ENCODE measurements at regions of chr1 and their contacts with region 1.

Region 1: GRCh38 chr1:155871390-155871789 is 12.0 kb downstream of the SYT11 start:
- DNase-seq: peak; percentile 79 to 98 (median 93)

Region 2: GRCh38 chr1:155504207-155504606 is 367.2 kb before region 1 on chr1:
- intact Hi-C with region 1: no loop called
- DNase-seq: peak in 3 of 42 donors; percentile 18 to 34 (median 34)

Region 3: GRCh38 chr1:155717041-155717440 is 154.3 kb before region 1 on chr1:
- intact Hi-C with region 1: no loop called
- DNase-seq: peak in 1 of 42 donors; percentile 4

Region 4: GRCh38 chr1:155911156-155912055 is 40.0 kb after region 1 on chr1 and contains the start of gene RIT1:
- intact Hi-C with region 1: loop called (anchors 5 kb)
- DNase-seq: peak; percentile 65 to 93 (median 87)

Measured in head of caudate nucleus (tissue), 42 donors.